ENCODE measurements at regions of chr11 and their contacts with region 1.

Region 1: DNA sequence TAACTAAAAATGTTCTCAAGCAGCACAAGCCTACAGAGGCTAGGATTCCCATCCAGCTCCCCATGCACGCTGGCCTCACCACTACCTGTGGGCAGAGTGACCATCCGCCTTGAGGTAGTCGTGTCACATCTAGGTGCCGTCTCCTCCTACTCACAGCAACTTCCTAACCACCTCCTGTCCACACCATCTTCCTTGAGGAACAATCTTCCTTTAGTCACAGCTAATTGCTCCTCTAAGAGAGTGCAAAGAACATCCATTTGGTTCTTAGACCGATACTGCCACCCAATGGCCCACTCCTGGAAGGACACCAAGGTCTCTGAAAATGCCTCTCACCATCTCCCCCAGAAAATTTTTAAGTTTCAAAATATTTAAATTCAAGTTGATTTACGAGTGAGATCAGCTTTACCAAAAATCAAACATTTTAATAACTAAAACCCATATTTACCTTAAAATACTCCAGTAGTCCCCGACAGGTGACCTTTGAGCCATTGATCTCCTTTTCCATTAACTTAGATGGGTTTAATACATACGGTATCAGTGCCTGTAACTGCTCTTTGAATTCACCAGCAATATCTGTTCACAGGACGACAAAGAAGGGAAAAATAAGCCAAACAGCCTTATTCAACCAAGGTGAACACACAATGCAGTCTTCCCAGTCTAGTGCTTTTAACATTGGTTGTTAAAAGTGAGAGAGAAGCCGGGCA is 21.7 kb upstream of the PLAAT3 start:
- DNase-seq: peak; percentile 64
- H3K4me3 ChIP-seq: no peak overlapping the region
- H3K27ac ChIP-seq: no peak overlapping the region
- H3K4me1 ChIP-seq: peaks cover 0 to 12% (median 2%) of the 10 kb centered on the region in 4 donors
- H3K27me3 ChIP-seq: no peaks in the 10 kb centered on the region
- CTCF ChIP-seq: peak; percentile 64 to 88 (median 81)
- EP300 ChIP-seq: no peak
- POLR2A ChIP-seq: no peak

Region 2: DNA sequence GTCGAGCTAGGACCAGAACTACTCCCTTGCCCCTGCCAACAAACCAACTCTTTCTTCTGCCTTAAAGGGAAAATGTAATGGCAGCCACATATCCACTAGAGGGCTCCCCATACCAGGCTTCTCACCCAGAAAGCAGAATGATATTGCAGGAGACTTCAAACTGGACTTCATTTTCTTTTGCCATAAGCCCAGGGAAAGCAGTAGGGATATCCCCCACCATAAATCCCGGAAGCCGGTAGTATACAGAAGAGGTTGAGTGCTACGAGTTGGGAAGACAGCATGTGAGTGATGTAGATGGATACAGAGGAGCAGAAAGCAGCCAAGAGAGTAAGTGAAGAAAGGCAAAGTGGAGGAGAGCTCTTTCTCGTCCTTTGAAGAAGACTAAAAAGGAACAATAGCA is 157.0 kb before region 1 on chr11:
- in situ Hi-C with region 1: loop called (anchors 5 to 10 kb)
- intact Hi-C with region 1: loop called (anchors 5 kb)
- DNase-seq: peak; percentile 39
- H3K4me3 ChIP-seq: no peak overlapping the region
- H3K27ac ChIP-seq: no peak overlapping the region
- H3K4me1 ChIP-seq: peaks cover 0 to 4% (median 0%) of the 10 kb centered on the region in 4 donors
- H3K27me3 ChIP-seq: no peaks in the 10 kb centered on the region
- CTCF ChIP-seq: peak; percentile 89 to 92 (median 89)
- EP300 ChIP-seq: no peak
- POLR2A ChIP-seq: no peak

Region 3: GRCh38 chr11:63489879-63490278 is 146.0 kb before region 1 on chr11:
- in situ Hi-C with region 1: loop called in 1 of 4 experiments (anchors 10 kb)
- intact Hi-C with region 1: no loop called
- DNase-seq: no peak
- H3K4me3 ChIP-seq: no peak overlapping the region
- H3K27ac ChIP-seq: peak overlapping the region; percentile 60 to 82 (median 67)
- H3K4me1 ChIP-seq: peaks cover 5 to 17% (median 10%) of the 10 kb centered on the region in 4 donors
- H3K27me3 ChIP-seq: peaks cover 46% of the 10 kb centered on the region
- CTCF ChIP-seq: no peak
- EP300 ChIP-seq: no peak
- POLR2A ChIP-seq: no peak

Region 4: DNA sequence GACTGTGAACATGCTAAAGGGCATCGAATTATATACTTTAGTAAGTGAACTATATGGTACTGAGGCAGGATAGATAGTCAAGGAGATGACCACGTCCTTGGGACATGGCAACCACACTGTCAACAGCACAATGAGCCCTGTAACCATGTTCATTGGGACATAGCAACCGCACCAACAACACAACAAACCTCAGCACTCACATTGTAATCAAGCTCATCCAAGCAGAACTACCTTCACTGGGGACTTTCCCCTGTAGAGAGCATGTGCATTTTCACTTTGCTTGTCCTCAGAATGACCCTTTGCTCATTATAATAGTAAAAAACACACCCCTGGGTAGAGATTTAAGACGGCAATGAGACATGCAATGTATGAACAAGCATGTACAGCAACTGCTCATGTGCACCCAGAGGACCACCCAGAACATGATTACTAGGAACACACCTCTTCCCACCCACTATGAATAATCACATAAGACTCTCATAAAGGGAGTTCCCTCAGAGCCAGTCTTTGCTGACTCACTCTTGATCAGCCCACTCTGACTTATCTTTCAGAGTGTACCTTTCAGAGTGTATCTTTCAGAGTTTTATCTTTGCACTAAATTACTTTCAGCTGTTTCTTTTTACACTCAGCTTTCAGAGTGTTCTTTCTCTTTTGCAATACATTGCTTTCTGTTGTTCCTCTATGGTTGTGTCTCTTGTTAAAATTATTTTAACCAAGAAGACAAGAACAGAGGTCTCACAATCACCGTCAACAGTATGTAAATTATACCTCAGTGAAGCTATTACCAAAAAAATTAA is 68.7 kb before region 1 on chr11:
- in situ Hi-C with region 1: no loop called
- intact Hi-C with region 1: no loop called
- DNase-seq: peak; percentile 57
- H3K4me3 ChIP-seq: no peak overlapping the region
- H3K27ac ChIP-seq: peak overlapping the region; percentile 60 to 89 (median 78)
- H3K4me1 ChIP-seq: peaks cover 18 to 41% (median 23%) of the 10 kb centered on the region in 4 donors
- H3K27me3 ChIP-seq: no peaks in the 10 kb centered on the region
- CTCF ChIP-seq: no peak
- EP300 ChIP-seq: peak; percentile 44
- POLR2A ChIP-seq: no peak

Region 5: GRCh38 chr11:63652671-63653070 is 16.8 kb after region 1 on chr11:
- in situ Hi-C with region 1: no loop called
- intact Hi-C with region 1: no loop called
- DNase-seq: no peak
- H3K4me3 ChIP-seq: no peak overlapping the region
- H3K27ac ChIP-seq: no peak overlapping the region
- H3K4me1 ChIP-seq: no peaks in the 10 kb centered on the region
- H3K27me3 ChIP-seq: no peaks in the 10 kb centered on the region
- CTCF ChIP-seq: no peak
- EP300 ChIP-seq: no peak
- POLR2A ChIP-seq: no peak

Measured in transverse colon (tissue), 4 donors.